ENCODE measurements at regions of chr1 and their contacts with region 1.

Region 1: GRCh38 chr1:37486680-37487618 is 12.6 kb downstream of the ZC3H12A start:
- DNase-seq: peak; percentile 68
- H3K4me3 ChIP-seq: no peak overlapping the region
- H3K27ac ChIP-seq: peak overlapping the region; percentile 29
- H3K4me1 ChIP-seq: peaks cover 12% of the 10 kb centered on the region
- CTCF ChIP-seq: peak; percentile 97

Region 2: GRCh38 chr1:37455516-37455915 is 31.4 kb before region 1 on chr1:
- CTCF ChIA-PET with region 1: interaction called, 7 read pairs
- POLR2A ChIA-PET with region 1: interaction called, 3 read pairs
- intact Hi-C with region 1: loop called (anchors 1 kb)
- DNase-seq: no peak
- H3K4me3 ChIP-seq: no peak overlapping the region
- H3K27ac ChIP-seq: no peak overlapping the region
- H3K4me1 ChIP-seq: peaks cover 11% of the 10 kb centered on the region
- CTCF ChIP-seq: no peak

Measured in OCI-LY7 (cell line).